ENCODE measurements at regions of chr10 and their contacts with region 1.

Region 1: DNA sequence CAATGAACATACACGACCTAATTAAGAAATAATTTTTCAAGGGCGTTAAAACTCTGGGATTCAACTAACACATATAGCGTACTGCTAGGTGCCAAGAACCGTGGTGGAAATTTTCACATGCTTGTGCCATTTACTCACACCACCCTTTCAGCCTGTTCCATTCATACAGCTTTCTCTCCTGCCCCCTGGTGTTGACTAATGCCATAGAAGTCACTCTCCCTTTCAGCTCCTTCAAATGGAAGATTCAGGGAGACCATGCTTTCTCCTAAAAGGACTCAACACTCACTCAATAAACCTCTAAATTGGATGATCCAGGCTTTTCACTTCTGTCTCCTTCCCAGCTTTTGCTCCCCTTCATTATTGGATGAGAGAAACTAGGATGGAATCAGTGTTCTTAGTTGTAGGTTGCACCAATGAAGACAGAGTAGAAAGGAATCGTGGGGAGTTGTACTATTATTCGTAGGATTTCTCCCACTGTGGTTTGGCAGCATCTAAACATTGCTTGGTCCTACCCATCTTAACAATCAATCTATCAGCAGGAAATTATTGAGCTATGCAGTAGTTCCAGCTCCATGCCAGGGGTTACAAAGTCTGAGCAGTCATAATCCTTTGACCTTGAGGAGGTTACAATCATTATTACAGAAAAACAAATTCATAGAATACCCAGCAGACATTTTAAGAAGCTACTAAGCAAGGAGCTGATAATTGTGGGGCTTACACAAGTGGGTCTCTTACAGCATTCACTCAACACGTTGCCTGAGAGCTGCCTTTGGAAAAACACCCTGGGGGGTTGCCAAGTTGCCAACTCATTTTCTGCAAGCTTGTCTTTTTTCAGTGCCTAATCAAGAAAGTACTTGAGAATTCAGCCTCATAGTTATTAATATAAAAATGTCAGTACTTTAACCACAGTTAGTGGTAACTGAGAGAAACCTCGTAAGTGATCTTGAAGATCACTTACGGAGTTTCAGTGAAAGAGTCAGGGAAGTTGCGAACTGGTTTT is 2.8 kb upstream of the PPP1R3C start:
- DNase-seq: no peak
- ATAC-seq: peak; percentile 43

Region 2: GRCh38 chr10:91493313-91493712 is 142.4 kb before region 1 on chr10:
- intact Hi-C with region 1: loop called (anchors 2 kb)
- DNase-seq: no peak
- ATAC-seq: no peak

Region 3: GRCh38 chr10:91551856-91552255 is 83.8 kb before region 1 on chr10:
- intact Hi-C with region 1: loop called (anchors 1 kb)
- DNase-seq: peak; percentile 62
- ATAC-seq: peak; percentile 88

Measured in Right ventricle myocardium superior (tissue), 1 donor.